WTC11 (cell line): ENCODE measurements at regions of chr4 and their contacts with region 1.

Region 1: DNA sequence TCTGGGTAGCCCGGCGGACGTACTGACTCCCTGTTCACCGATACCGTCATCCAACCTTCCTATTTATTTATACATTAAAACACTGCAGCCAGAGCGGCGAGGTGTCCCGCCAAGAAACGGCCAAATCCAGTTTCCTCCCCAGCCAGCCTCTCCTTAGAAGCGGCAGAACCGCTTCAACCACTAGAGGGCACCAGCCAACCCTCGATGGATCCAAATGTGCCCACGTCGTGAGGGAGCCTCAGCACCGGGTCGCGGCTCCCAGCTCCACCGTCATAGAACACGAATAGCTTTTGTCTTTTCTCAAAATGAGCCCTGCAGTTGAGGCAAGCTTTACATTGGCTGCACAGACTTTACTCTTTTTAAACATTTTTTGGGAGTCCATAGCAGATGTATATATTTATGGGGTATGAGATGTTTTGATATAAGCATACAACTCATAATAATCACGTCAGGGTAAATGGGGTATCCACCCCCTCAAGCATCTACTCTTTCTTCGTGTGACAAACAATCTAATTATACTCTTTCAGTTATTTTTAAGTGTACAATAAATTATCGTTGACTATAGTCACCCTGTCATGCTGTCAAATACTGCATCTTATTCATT is 13.0 kb upstream of the HELT start:
- DNase-seq: peak; percentile 91
- ATAC-seq: peak; percentile 83
- H3K4me3 Mint-ChIP-seq: peak overlapping the region; percentile 77
- H3K27ac Mint-ChIP-seq: no peak overlapping the region
- H3K4me1 Mint-ChIP-seq: peaks cover 18% of the 10 kb centered on the region
- H3K27me3 Mint-ChIP-seq: peaks cover 56% of the 10 kb centered on the region
- CTCF ChIP-seq: peak; percentile 82

Region 2: GRCh38 chr4:184733654-184734524 is 271.4 kb before region 1 on chr4 and contains the start of gene CENPU:
- CTCF ChIA-PET with region 1: interaction called, 10 read pairs
- POLR2A ChIA-PET with region 1: no interaction called
- DNase-seq: peak; percentile 97
- ATAC-seq: peak; percentile 95
- H3K4me3 Mint-ChIP-seq: peak within 1 kb of the TSS; percentile 91
- H3K27ac Mint-ChIP-seq: peak within 1 kb of the TSS; percentile 92
- H3K4me1 Mint-ChIP-seq: peaks cover 36% of the 10 kb centered on the region
- H3K27me3 Mint-ChIP-seq: peaks cover 8% of the 10 kb centered on the region
- CTCF ChIP-seq: no peak
- total RNA-seq, gene CENPU: 52.9 to 60.5 TPM (median 53.4 TPM) in 3 replicates

Region 3: GRCh38 chr4:185020293-185020808 is 15.0 kb after region 1 on chr4:
- CTCF ChIA-PET with region 1: interaction called, 36 read pairs
- POLR2A ChIA-PET with region 1: no interaction called
- DNase-seq: peak; percentile 74
- ATAC-seq: peak; percentile 11
- H3K4me3 Mint-ChIP-seq: peak overlapping the region; percentile 65
- H3K27ac Mint-ChIP-seq: no peak overlapping the region
- H3K4me1 Mint-ChIP-seq: peaks cover 46% of the 10 kb centered on the region
- H3K27me3 Mint-ChIP-seq: peaks cover 100% of the 10 kb centered on the region
- CTCF ChIP-seq: no peak

Region 4: GRCh38 chr4:185096032-185096653 is 90.8 kb after region 1 on chr4:
- CTCF ChIA-PET with region 1: interaction called, 39 read pairs
- POLR2A ChIA-PET with region 1: interaction called, 3 read pairs
- DNase-seq: no peak
- ATAC-seq: no peak
- H3K4me3 Mint-ChIP-seq: no peak overlapping the region
- H3K27ac Mint-ChIP-seq: no peak overlapping the region
- H3K4me1 Mint-ChIP-seq: peaks cover 28% of the 10 kb centered on the region
- H3K27me3 Mint-ChIP-seq: no peaks in the 10 kb centered on the region
- CTCF ChIP-seq: no peak

Region 5: GRCh38 chr4:185142912-185143595 is 137.7 kb after region 1 on chr4 and contains the start of gene SLC25A4:
- CTCF ChIA-PET with region 1: interaction called, 16 read pairs
- POLR2A ChIA-PET with region 1: no interaction called
- DNase-seq: peak; percentile 88
- ATAC-seq: peak; percentile 94
- H3K4me3 Mint-ChIP-seq: peak within 1 kb of the TSS; percentile 84
- H3K27ac Mint-ChIP-seq: peak within 1 kb of the TSS; percentile 83; the same call in 1 of the 2 replicates
- H3K4me1 Mint-ChIP-seq: peaks cover 24% of the 10 kb centered on the region
- H3K27me3 Mint-ChIP-seq: peaks cover 5% of the 10 kb centered on the region; the same call in 1 of the 2 replicates
- CTCF ChIP-seq: no peak
- total RNA-seq, gene SLC25A4: 40.2 to 44.6 TPM (median 43.9 TPM) in 3 replicates